ENCODE measurements at regions of chr1 and their contacts with region 1.

Region 1: DNA sequence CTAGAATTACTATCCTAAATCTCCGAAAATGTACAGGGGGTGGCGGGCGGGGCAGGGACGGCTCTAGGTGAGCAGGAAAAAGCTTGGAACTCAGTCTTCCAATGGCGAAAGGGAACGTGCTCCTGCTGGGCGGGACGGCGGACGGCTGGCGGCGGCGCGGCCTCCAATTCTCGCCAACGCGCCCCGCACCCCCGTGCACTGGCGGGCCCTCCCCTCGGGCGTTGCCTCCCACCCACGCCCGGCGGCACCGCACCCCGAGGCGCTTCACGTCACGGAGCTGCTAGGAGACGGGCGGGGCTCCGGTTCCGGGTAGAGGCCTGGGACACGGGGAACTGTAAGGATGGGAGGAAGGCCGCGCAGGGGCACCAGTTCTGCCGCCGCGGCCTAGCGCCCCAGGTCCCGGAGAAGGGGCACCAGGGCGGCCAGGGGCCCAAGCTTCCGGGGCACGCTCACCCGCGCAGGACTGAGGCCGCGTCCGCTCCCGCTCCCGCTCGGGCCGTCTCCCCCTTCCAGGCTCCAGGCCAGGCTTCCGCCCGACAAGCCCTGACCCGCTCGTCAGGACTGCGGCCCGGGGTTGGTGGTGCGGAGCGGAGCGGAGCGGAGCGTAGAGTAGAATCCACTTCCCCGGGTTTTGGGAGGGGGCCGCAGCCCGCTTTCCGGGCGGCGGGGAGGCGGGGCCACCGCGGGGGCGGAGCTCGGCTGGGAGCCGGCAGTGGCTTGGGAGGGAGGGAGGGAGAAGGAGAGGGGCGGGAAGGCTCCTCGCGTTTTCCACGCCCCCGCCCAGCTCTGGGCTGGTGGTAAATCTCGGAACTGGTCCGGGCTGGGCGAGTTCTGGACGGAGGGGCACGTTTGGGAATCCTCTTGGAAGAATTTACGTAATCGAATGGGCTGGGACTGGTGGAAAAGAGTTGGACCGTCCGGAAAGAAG is at the start of gene DDX59:
- DNase-seq: peak; percentile 99
- H3K4me3 ChIP-seq: peak within 1 kb of the TSS; percentile 57 to 75 (median 61)
- H3K27ac ChIP-seq: peak within 1 kb of the TSS; percentile 97
- H3K4me1 ChIP-seq: peaks cover 41% of the 10 kb centered on the region
- H3K27me3 ChIP-seq: no peaks in the 10 kb centered on the region
- CTCF ChIP-seq: no peak
- total RNA-seq, gene DDX59: 8.7 to 20.0 TPM

Region 2: DNA sequence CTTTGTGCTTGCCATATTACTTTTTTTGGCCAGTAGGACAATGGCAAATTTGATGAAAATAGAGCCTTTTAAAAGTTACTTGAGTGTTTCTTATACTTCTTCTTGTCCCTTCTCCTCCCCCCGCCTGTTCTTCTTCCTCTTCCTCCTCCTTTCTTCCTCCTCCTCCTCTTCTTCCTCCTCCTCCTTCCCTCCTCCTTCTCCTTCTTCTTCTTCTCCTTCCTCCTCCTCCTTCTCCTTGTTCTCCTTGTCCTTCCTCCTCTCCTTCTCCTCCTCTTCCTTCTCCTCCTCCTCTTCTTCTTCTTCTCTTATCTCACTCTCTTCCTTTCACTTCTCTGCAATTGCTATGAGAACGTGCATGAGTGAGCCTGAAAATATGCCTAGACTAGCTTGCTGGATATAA is 1108.2 kb before region 1 on chr1:
- CTCF ChIA-PET with region 1: no interaction called
- dilution Hi-C with region 1: no loop called
- in situ Hi-C with region 1: no loop called
- intact Hi-C with region 1: no loop called
- DNase-seq: no peak
- H3K4me3 ChIP-seq: no peak overlapping the region
- H3K27ac ChIP-seq: no peak overlapping the region
- H3K4me1 ChIP-seq: no peaks in the 10 kb centered on the region
- H3K27me3 ChIP-seq: no peaks in the 10 kb centered on the region
- CTCF ChIP-seq: no peak

Region 3: GRCh38 chr1:200628223-200628881 is 41.2 kb before region 1 on chr1:
- CTCF ChIA-PET with region 1: no interaction called
- dilution Hi-C with region 1: loop called (anchors 5 kb)
- in situ Hi-C with region 1: no loop called
- intact Hi-C with region 1: loop called (anchors 1 kb)
- DNase-seq: no peak
- H3K4me3 ChIP-seq: no peak overlapping the region
- H3K27ac ChIP-seq: no peak overlapping the region
- H3K4me1 ChIP-seq: peaks cover 15% of the 10 kb centered on the region
- H3K27me3 ChIP-seq: no peaks in the 10 kb centered on the region
- CTCF ChIP-seq: no peak

Region 4: GRCh38 chr1:200639790-200640669 is 29.5 kb before region 1 on chr1:
- CTCF ChIA-PET with region 1: no interaction called
- dilution Hi-C with region 1: no loop called
- in situ Hi-C with region 1: no loop called
- intact Hi-C with region 1: loop called (anchors 2 kb)
- DNase-seq: peak; percentile 82
- H3K4me3 ChIP-seq: no peak overlapping the region
- H3K27ac ChIP-seq: peak overlapping the region; percentile 95
- H3K4me1 ChIP-seq: peaks cover 15% of the 10 kb centered on the region
- H3K27me3 ChIP-seq: no peaks in the 10 kb centered on the region
- CTCF ChIP-seq: no peak

Region 5: DNA sequence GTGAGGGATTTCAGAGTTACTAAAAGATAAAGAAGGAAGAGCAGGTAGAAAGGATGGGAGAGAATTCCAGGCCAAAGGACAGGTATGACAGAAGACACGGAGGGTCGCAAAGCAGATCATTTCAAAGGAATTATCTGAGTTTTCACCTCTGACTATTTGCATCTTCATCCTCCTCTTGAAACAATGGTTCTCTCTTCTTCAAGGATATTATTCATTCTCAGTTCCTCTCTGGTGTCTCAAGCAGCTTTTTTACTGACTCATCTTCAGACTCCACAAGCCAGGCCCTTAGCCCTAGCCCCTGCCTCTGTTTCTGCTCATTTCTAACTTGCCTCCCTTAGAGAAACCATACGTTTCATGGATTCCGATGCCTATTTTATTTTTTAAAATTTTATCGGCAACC is 14.9 kb before region 1 on chr1:
- CTCF ChIA-PET with region 1: interaction called, 5 read pairs
- dilution Hi-C with region 1: no loop called
- in situ Hi-C with region 1: no loop called
- intact Hi-C with region 1: loop called (anchors 1 kb)
- DNase-seq: peak; percentile 62
- H3K4me3 ChIP-seq: no peak overlapping the region
- H3K27ac ChIP-seq: peak overlapping the region; percentile 89
- H3K4me1 ChIP-seq: peaks cover 32% of the 10 kb centered on the region
- H3K27me3 ChIP-seq: no peaks in the 10 kb centered on the region
- CTCF ChIP-seq: no peak

Region 6: DNA sequence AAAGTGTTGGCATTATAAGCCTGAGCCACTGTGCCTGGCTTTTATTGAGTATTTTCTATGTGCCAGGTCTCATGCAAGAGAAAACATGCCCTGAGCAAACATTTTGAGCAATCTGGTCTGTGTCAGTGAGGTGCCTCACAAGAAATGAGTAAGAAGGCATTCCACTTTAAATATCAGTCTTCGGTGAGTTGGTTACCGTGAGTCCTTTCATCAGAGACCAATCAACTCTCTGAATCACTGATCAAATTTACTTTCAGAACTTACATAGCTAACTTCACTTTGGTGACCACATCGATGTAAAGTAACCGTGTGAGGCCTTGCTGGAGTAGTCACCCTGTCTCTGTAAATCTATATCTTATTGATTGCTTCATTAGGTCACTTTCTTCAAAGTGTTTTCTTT is 14.4 kb after region 1 on chr1:
- CTCF ChIA-PET with region 1: no interaction called
- dilution Hi-C with region 1: no loop called
- in situ Hi-C with region 1: no loop called
- intact Hi-C with region 1: loop called (anchors 1 kb)
- DNase-seq: peak; percentile 84
- H3K4me3 ChIP-seq: no peak overlapping the region
- H3K27ac ChIP-seq: peak overlapping the region; percentile 54
- H3K4me1 ChIP-seq: peaks cover 7% of the 10 kb centered on the region
- H3K27me3 ChIP-seq: no peaks in the 10 kb centered on the region
- CTCF ChIP-seq: no peak

Region 7: DNA sequence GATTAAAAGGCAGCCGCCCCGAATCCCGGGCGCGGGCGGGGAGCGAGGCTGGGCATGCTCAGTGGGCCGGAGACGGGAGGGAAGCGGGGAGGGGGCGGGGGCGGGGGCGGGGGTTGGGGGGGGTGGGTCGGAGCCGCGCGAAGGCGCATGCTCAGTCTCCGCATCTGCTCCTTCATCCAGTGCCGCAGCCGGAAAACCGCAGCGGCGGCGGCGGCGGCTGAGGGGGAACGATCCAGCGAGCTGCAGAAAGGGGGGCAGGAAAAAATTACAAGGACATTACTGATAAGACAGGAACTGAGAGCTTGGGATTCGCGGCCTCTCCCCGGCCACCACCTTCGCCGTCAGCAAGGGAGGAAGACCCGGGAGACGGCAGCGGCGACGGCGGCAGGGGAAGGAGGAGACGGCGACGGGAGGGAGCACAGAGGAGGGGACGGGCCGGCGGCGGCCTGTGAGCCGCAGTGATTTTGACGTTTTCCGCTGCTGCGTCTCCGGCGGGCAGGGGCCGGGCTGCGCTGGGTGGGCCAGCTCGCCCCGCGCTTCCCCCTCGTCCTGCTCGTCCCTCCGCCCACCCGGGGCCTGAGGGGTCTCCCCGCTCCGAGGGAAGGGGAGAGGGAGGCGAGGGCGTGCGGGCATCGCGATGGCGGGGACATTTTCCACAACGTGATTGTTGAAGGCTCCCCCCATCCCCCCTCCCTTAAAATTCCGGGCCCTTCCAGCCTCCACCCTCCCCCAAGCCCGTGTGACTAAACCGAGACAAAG is 69.3 kb after region 1 on chr1 and contains the start of gene CAMSAP2:
- CTCF ChIA-PET with region 1: no interaction called
- dilution Hi-C with region 1: no loop called
- in situ Hi-C with region 1: no loop called
- intact Hi-C with region 1: loop called (anchors 1 kb)
- DNase-seq: peak; percentile 85
- H3K4me3 ChIP-seq: peak within 1 kb of the TSS; percentile 90 to 94 (median 93)
- H3K27ac ChIP-seq: peak within 1 kb of the TSS; percentile 88
- H3K4me1 ChIP-seq: peaks cover 10% of the 10 kb centered on the region
- H3K27me3 ChIP-seq: no peaks in the 10 kb centered on the region
- CTCF ChIP-seq: no peak
- total RNA-seq, gene CAMSAP2: 79.7 to 118 TPM

Region 8: GRCh38 chr1:200802865-200803512 is 133.4 kb after region 1 on chr1:
- CTCF ChIA-PET with region 1: no interaction called
- dilution Hi-C with region 1: no loop called
- in situ Hi-C with region 1: no loop called
- intact Hi-C with region 1: loop called (anchors 2 kb)
- DNase-seq: peak; percentile 57
- H3K4me3 ChIP-seq: no peak overlapping the region
- H3K27ac ChIP-seq: no peak overlapping the region
- H3K4me1 ChIP-seq: no peaks in the 10 kb centered on the region
- H3K27me3 ChIP-seq: no peaks in the 10 kb centered on the region
- CTCF ChIP-seq: peak; percentile 95 to 96